A549 (cell line): ENCODE measurements at regions of chr12 and their contacts with region 1.

Region 1: GRCh38 chr12:50504798-50505385 is at the start of gene DIP2B:
- DNase-seq: peak; percentile 73 to 95
- ATAC-seq: peak; percentile 91 to 93
- H3K4me3 ChIP-seq: peak within 1 kb of the TSS; percentile 62
- H3K27ac ChIP-seq: peak within 1 kb of the TSS; percentile 88 to 94
- H3K4me1 ChIP-seq: peaks cover 40% of the 10 kb centered on the region
- CTCF ChIP-seq: peak; percentile 93
- EP300 ChIP-seq: no peak
- POLR2A ChIP-seq: peak; percentile 66
- RAD21 ChIP-seq: peak; percentile 98 to 99
- polyA plus RNA-seq, gene DIP2B: 29.3 and 32.8 TPM in 2 replicates

Region 2: DNA sequence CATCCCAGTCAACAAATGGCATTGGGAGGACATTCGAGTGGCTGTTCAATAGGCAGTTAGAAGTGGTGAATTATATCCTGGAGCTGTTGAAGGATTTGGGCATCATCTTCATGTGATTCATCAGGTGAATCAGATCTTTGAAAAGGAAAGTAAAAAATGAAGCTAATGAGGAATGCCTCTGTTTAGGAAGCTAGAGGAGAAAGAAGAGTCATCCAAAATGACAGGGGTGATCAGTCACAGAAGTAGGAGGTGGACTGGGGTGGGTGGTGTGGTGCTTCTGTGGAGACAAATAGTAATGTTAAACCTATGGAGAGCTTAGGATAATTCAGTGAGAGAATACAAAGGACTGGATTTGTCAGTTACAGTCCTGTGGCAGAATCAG is 32.6 kb after region 1 on chr12:
- CTCF ChIA-PET with region 1: interaction called, 19 read pairs
- POLR2A ChIA-PET with region 1: interaction called, 3 read pairs
- DNase-seq: peak; percentile 30 to 40
- ATAC-seq: peak; percentile 33 to 44; a peak in 3 of 6 replicates
- H3K4me3 ChIP-seq: no peak overlapping the region
- H3K27ac ChIP-seq: peak overlapping the region; percentile 1 to 71; a peak in 4 of 6 replicates
- H3K4me1 ChIP-seq: peaks cover 67% of the 10 kb centered on the region
- CTCF ChIP-seq: no peak
- EP300 ChIP-seq: no peak
- POLR2A ChIP-seq: no peak
- RAD21 ChIP-seq: no peak

Region 3: GRCh38 chr12:50620109-50620977 is 115.5 kb after region 1 on chr12:
- CTCF ChIA-PET with region 1: interaction called, 16 read pairs
- POLR2A ChIA-PET with region 1: no interaction called
- DNase-seq: peak in 1 of 2 experiments; percentile 39
- ATAC-seq: peak; percentile 76 to 86
- H3K4me3 ChIP-seq: no peak overlapping the region
- H3K27ac ChIP-seq: peak overlapping the region; percentile 41 to 71; a peak in 5 of 6 replicates
- H3K4me1 ChIP-seq: peaks cover 54% of the 10 kb centered on the region
- CTCF ChIP-seq: no peak
- EP300 ChIP-seq: no peak
- POLR2A ChIP-seq: no peak
- RAD21 ChIP-seq: 0 out of 5 replicates have a peak, but pooled peaks of 1 of the 2 experiments have one; percentile 5

Region 4: DNA sequence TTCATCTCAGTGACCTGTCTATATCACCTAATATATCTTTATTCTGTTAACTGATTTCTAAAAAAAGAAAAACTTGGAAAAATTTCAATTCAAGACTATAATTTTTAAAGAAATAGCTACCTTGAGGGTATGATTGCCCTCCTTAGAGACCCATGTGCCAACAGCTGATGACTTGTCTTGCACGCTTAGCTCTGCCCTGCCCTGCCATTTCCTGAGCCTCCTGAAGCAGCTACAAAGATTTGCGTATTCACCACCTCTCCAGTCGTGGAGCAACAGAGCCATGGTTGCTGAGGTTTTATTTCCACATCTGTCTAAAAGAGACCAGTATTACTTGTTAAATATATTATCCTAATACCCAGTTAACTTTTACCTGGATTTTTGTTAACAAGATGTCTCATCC is 167.3 kb after region 1 on chr12:
- CTCF ChIA-PET with region 1: interaction called, 11 read pairs
- POLR2A ChIA-PET with region 1: no interaction called
- DNase-seq: no peak
- ATAC-seq: no peak
- H3K4me3 ChIP-seq: no peak overlapping the region
- H3K27ac ChIP-seq: no peak overlapping the region
- H3K4me1 ChIP-seq: no peaks in the 10 kb centered on the region
- CTCF ChIP-seq: no peak
- EP300 ChIP-seq: no peak
- POLR2A ChIP-seq: no peak
- RAD21 ChIP-seq: no peak

Region 5: GRCh38 chr12:50708631-50709030 is 203.7 kb after region 1 on chr12:
- CTCF ChIA-PET with region 1: interaction called, 15 read pairs
- POLR2A ChIA-PET with region 1: no interaction called
- DNase-seq: no peak
- ATAC-seq: no peak
- H3K4me3 ChIP-seq: no peak overlapping the region
- H3K27ac ChIP-seq: no peak overlapping the region
- H3K4me1 ChIP-seq: no peaks in the 10 kb centered on the region
- CTCF ChIP-seq: no peak
- EP300 ChIP-seq: no peak
- POLR2A ChIP-seq: no peak
- RAD21 ChIP-seq: no peak